Vagina (tissue), 2 donors: ENCODE measurements at regions of chr3 and their contacts with region 1.

Region 1: DNA sequence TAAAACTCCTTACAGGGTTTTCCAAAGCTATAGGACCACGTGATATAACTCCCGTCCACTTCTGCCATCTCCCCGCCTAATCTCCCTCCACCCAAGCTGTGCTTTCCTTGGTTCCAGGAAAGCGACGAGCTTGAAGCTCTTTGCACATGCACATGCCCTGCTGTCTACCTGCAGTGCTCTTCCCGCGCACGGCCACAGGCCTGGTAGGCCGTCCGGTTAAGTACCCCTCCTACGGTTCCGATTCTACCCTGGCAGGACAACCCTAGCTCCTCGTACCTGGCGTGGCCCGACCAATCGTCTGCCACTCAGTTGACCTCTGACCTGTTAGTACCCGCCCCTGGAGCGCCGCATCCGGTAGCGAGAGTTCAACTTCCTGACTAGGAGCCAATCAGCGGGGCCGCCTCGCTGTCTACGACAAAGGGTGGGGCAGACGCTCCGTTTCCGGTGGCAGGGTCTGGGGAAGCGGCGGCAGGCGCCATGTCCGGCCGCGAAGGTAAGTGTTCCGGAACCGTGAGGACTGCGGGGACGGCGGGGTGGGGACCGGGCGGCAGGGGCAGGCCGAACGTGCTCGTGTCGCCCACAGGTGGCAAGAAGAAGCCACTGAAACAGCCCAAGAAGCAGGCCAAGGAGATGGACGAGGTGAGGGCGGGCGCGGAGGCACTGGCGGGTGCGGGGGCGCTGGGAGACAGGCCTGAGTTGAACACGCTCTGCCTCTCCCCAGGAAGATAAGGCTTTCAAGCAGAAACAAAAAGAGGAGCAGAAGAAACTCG is at the starts of genes CCDC51 and TMA7:
- DNase-seq: peak in 1 of 2 donors; percentile 99
- H3K4me3 ChIP-seq: peak within 1 kb of the TSS; percentile 68 to 73
- H3K27ac ChIP-seq: peak within 1 kb of the TSS; percentile 78
- H3K4me1 ChIP-seq: peaks cover 35% of the 10 kb centered on the region
- H3K27me3 ChIP-seq: no peaks in the 10 kb centered on the region
- CTCF ChIP-seq: no peak
- POLR2A ChIP-seq: peak in 1 of 2 donors; percentile 86
- total RNA-seq, gene CCDC51: 11.5 TPM
- total RNA-seq, gene TMA7: 251 TPM

Region 2: GRCh38 chr3:48273594-48274211 is 166.3 kb before region 1 on chr3:
- intact Hi-C with region 1: loop called (anchors 10 kb)
- DNase-seq: no peak
- H3K4me3 ChIP-seq: no peak overlapping the region
- H3K27ac ChIP-seq: no peak overlapping the region
- H3K4me1 ChIP-seq: peaks cover 21% of the 10 kb centered on the region
- H3K27me3 ChIP-seq: no peaks in the 10 kb centered on the region
- CTCF ChIP-seq: peak; percentile 27 to 59 (median 56)
- POLR2A ChIP-seq: no peak

Region 3: GRCh38 chr3:48301020-48301796 is 138.8 kb before region 1 on chr3:
- intact Hi-C with region 1: loop called (anchors 5 kb)
- DNase-seq: no peak
- H3K4me3 ChIP-seq: peak within 1 kb of the TSS; percentile 93 to 97
- H3K27ac ChIP-seq: peak within 1 kb of the TSS; percentile 96
- H3K4me1 ChIP-seq: peaks cover 18% of the 10 kb centered on the region
- H3K27me3 ChIP-seq: no peaks in the 10 kb centered on the region
- CTCF ChIP-seq: no peak
- POLR2A ChIP-seq: peak in 1 of 2 donors; percentile 67

Region 4: DNA sequence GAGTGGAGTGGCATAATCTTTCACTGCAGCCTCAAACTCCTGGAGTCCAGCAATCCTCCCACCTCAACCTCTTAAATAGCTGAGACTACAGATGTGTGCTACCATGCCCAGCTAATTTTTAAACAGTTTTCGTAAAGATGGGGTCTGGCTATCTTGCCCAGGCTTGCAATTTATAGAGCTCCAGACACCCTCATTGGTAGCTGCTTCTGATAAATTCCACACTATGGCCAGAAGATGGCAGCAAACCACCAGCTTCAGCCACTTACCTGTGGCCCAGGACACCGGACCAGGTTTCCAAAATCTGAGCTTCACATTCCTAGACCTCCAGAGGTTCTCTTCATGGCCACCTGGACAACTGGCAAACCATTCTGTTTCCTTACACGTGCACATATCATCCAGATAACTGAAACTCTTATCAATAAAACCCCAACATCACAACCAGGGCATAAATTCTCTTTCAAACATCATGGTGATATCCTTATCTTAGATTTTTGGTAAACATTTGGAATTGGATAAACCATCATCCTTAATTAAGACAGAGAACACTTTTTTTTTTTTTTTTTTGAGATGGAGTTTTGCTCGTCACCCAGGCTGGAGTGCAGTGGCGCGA is 39.1 kb before region 1 on chr3:
- intact Hi-C with region 1: loop called (anchors 5 kb)
- DNase-seq: no peak
- H3K4me3 ChIP-seq: no peak overlapping the region
- H3K27ac ChIP-seq: peak overlapping the region; percentile 82
- H3K4me1 ChIP-seq: peaks cover 12% of the 10 kb centered on the region
- H3K27me3 ChIP-seq: no peaks in the 10 kb centered on the region
- CTCF ChIP-seq: peak; percentile 77 to 95 (median 83)
- POLR2A ChIP-seq: no peak